ENCODE measurements at regions of chr7 and their contacts with region 1.

Region 1: DNA sequence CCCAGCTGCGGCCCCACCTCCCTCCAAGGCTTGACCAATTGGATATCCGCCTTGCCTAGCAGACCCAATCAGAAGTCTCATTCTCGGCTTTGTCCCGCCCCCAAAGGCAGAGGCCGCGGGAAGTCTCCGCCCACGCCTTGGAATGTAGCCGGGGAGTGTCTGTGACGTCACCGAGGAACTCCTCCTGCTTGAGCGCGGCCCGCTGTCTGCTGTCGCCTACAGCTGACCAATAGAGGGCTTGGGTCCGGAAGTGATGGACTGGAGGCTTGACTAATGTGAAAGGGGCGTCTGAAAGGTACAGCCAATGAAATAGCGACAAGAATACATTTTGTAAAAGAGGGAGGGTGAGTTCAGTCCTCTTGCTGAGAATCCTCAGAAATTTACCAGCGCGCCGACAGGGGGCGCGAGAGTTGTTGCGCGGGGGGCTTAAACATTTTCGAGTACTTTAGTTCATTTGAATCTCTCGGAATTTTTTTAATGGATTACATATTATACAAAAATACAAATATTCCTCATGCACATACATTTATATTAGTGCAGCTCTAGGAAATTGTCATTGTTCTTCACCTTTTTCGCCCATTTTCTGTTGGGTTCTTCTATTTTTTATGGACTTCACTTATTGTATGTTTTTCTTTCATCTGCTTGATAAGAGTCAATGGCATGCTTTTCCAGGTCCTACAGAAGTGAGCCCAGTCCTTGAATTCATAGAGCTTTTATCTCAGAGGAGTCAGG is 376 bp upstream of the CREB3L2 start:
- DNase-seq: peak; percentile 100
- H3K4me3 ChIP-seq: peak overlapping the region; percentile 97
- H3K27ac ChIP-seq: peak overlapping the region; percentile 99
- H3K27me3 ChIP-seq: no peaks in the 10 kb centered on the region
- CTCF ChIP-seq: peak; percentile 87

Region 2: GRCh38 chr7:137898839-137899721 is 103.2 kb before region 1 on chr7:
- CTCF ChIA-PET with region 1: interaction called, 365 read pairs
- POLR2A ChIA-PET with region 1: no interaction called
- DNase-seq: peak; percentile 47
- H3K4me3 ChIP-seq: no peak overlapping the region
- H3K27ac ChIP-seq: peak overlapping the region; percentile 47
- H3K27me3 ChIP-seq: no peaks in the 10 kb centered on the region
- CTCF ChIP-seq: peak; percentile 98

Region 3: DNA sequence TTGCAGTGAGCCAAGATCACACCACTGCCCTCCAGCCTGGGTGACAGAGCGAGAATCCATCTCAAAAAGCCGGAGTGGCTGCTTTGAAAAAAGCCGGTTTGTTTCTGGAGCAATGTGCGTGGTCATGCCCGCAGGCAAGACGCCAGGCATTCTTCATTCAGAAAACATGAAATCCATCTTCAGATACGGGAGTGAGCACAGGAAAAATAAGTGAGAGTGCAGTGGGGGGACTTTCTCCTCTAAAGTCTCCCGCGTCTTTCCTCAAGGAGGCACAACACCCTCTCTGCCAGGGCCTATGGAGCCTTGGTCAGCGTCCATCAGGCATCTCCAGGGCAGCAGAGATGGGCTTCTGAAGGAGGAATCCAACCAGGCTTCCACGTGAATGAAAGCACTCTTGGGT is 93.2 kb before region 1 on chr7:
- CTCF ChIA-PET with region 1: interaction called, 365 read pairs
- POLR2A ChIA-PET with region 1: interaction called, 3 read pairs
- DNase-seq: no peak
- H3K4me3 ChIP-seq: no peak overlapping the region
- H3K27ac ChIP-seq: no peak overlapping the region
- H3K27me3 ChIP-seq: no peaks in the 10 kb centered on the region
- CTCF ChIP-seq: no peak

Region 4: GRCh38 chr7:137916980-137917645 is 85.1 kb before region 1 on chr7:
- CTCF ChIA-PET with region 1: interaction called, 22 read pairs
- POLR2A ChIA-PET with region 1: no interaction called
- DNase-seq: no peak
- H3K4me3 ChIP-seq: no peak overlapping the region
- H3K27ac ChIP-seq: no peak overlapping the region
- H3K27me3 ChIP-seq: no peaks in the 10 kb centered on the region
- CTCF ChIP-seq: no peak

Region 5: DNA sequence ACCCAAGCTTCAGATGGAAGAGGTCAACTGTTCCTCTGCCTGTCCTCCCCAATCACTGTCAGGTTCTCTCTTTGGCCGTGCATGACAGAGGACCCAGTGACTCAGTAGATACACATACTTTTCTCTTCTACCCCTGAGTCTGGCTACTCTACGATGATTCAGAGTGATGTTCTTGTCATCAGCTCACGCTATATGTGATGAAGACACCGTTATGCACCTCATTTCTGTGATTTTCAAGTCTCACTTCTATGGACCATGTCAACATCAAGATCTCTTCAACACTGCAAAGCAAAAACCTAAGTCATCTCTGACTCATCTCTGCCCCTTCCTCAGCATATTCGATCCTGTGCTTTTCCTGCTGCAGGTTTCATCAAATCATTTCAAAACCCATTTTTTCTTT is 78.9 kb before region 1 on chr7:
- CTCF ChIA-PET with region 1: interaction called, 22 read pairs
- POLR2A ChIA-PET with region 1: no interaction called
- DNase-seq: no peak
- H3K4me3 ChIP-seq: no peak overlapping the region
- H3K27ac ChIP-seq: peak overlapping the region; percentile 47
- H3K27me3 ChIP-seq: no peaks in the 10 kb centered on the region
- CTCF ChIP-seq: no peak

Region 6: GRCh38 chr7:137943147-137943551 is 59.1 kb before region 1 on chr7:
- CTCF ChIA-PET with region 1: interaction called, 18 read pairs
- POLR2A ChIA-PET with region 1: interaction called, 5 read pairs
- DNase-seq: peak; percentile 91
- H3K4me3 ChIP-seq: no peak overlapping the region
- H3K27ac ChIP-seq: peak overlapping the region; percentile 92
- H3K27me3 ChIP-seq: no peaks in the 10 kb centered on the region
- CTCF ChIP-seq: no peak

Region 7: DNA sequence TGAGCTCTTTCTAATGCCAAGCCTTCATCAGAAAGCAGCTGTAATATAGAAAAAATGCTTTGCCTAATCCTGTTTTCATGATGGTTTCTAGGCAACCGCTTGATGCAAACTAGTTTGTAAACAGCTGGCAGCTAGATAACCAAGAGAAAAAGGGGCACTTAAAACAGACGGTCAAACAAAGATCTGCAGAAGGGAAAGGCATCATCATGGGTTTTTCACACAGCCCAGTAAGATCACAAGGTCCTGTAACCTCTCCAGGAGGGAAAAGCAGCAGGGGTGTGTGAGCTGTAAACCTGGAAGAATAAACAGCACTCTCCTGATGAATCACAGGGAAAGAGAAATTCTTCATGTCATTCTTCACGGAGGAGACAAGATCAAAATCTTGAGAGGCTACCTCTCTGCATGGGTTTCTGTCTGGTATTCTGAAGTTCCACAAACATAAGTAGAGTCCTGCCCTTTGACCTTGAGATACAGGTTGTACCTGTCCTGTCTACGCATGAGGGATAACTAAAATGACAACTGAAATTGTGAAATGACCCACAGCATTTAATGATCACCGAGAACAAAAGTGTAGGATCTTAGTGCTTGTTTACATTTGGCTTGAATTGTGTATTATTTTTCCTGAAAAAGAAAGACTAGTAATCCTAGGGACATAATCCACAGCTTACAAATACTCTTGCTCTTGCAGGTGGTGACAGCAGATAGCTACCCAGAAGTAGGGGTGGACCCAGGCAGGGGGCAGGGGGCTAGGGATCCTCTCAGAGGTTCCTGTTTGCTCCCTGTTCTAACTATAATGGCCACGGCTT is 48.4 kb before region 1 on chr7:
- CTCF ChIA-PET with region 1: interaction called, 11 read pairs
- POLR2A ChIA-PET with region 1: interaction called, 9 read pairs
- DNase-seq: no peak
- H3K4me3 ChIP-seq: peak overlapping the region; percentile 8; the same call in 1 of the 2 replicates
- H3K27ac ChIP-seq: peak overlapping the region; percentile 92
- H3K27me3 ChIP-seq: no peaks in the 10 kb centered on the region
- CTCF ChIP-seq: no peak

Region 8: GRCh38 chr7:138125598-138126111 is 123.4 kb after region 1 on chr7:
- CTCF ChIA-PET with region 1: no interaction called
- POLR2A ChIA-PET with region 1: no interaction called
- DNase-seq: no peak
- H3K4me3 ChIP-seq: no peak overlapping the region
- H3K27ac ChIP-seq: no peak overlapping the region
- H3K27me3 ChIP-seq: no peaks in the 10 kb centered on the region
- CTCF ChIP-seq: no peak

Region 9: DNA sequence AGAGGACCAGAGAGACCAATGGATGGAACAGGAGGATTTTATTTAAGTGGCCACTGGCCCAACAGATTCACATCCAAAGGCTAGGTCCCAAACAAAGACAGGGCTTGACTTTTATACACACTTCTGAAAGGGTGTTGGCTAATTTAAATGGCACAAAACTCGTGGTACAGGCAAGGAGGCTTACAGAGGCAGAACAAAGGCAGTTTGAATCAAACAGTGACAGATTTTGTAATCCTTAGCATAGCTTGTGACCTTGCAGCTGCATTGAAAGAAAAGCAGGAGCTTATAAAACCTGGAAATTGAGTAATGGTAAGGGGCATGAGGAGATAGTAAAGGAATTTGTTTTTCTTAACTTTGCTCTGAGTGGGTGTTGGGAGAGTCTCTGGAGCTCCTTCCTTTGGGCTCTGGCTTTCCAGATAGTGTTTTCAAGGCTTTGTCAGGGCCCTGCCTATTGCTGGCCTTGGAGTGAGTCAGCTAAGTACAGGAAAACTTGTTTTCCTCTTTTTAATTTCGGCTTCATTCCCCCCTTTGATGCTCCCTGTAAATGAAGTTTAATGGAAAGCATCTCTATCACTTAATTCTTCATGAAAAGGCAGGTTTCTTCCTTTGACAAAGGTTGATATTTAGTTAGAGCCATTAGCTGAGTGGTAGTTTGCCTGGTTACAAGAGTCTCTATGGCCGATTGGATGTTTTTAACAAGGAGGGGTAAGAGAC is 554.7 kb after region 1 on chr7:
- CTCF ChIA-PET with region 1: no interaction called
- POLR2A ChIA-PET with region 1: no interaction called
- DNase-seq: no peak
- H3K4me3 ChIP-seq: no peak overlapping the region
- H3K27ac ChIP-seq: no peak overlapping the region
- H3K27me3 ChIP-seq: no peaks in the 10 kb centered on the region
- CTCF ChIP-seq: no peak